ENCODE measurements at regions of chr3 and their contacts with region 1.

Region 1: DNA sequence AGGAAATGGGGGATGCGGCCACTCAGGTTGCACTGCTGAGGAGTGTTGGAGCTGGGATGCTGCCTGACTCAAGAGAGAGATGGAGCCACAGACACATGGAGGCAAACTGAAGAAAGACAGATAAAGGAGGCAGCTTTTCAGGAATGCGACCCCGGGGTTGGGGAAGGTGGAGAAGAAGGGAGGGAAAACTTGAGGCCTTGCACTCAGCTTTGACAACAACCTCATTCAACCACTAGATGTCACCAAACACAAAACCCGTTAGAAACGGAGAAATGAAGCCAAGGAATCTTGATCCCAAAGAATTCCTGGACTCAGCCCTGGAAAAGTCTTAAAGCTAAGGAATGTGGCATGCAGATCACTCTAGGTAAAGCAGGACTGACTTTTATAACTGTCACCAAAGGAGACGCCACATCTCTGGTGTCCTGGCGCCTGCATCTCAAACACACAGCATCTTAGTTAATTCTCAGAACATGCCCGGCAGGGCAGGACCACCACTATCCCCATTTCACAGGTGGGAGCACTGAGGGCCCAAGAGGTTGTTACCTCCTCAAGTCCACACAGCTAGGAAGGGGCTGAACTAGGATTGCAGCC is 59.6 kb upstream of the LMCD1 start:
- DNase-seq: no peak
- H3K4me3 ChIP-seq: no peak overlapping the region
- H3K4me3 Mint-ChIP-seq: no peak overlapping the region
- H3K27ac ChIP-seq: no peak overlapping the region
- H3K27ac Mint-ChIP-seq: no peak overlapping the region
- H3K4me1 ChIP-seq: no peaks in the 10 kb centered on the region
- H3K4me1 Mint-ChIP-seq: no peaks in the 10 kb centered on the region
- H3K27me3 ChIP-seq: no peaks in the 10 kb centered on the region
- H3K27me3 Mint-ChIP-seq: no peaks in the 10 kb centered on the region
- CTCF ChIP-seq: peak; percentile 53

Region 2: DNA sequence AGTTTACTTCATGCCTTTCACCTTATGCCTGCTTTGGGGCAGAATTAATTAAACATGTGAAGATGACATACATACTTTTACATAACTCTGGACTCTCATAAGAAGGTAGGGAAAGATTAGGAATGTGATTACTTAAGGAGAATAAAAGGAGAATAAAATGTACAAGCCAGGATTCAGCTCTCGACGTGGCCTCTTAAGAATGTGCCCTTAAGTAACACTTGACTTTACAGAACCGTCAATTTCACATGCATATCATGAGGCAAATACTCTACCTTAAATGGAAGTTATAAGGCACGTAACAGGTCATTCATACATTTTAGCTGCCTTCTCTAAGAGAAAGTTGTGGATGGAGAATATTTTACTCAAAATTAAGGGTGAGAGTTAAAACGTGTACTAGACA is 204.2 kb before region 1 on chr3:
- intact Hi-C with region 1: no loop called
- DNase-seq: no peak
- H3K4me3 ChIP-seq: no peak overlapping the region
- H3K4me3 Mint-ChIP-seq: no peak overlapping the region
- H3K27ac ChIP-seq: no peak overlapping the region
- H3K27ac Mint-ChIP-seq: no peak overlapping the region
- H3K4me1 ChIP-seq: no peaks in the 10 kb centered on the region
- H3K4me1 Mint-ChIP-seq: no peaks in the 10 kb centered on the region
- H3K27me3 ChIP-seq: no peaks in the 10 kb centered on the region
- H3K27me3 Mint-ChIP-seq: peaks cover 0 to 1% (median 0%) of the 10 kb centered on the region in 3 donors
- CTCF ChIP-seq: no peak

Region 3: GRCh38 chr3:8458711-8459110 is 16.6 kb after region 1 on chr3:
- intact Hi-C with region 1: no loop called
- DNase-seq: no peak
- H3K4me3 ChIP-seq: no peak overlapping the region
- H3K4me3 Mint-ChIP-seq: no peak overlapping the region
- H3K27ac ChIP-seq: no peak overlapping the region
- H3K27ac Mint-ChIP-seq: no peak overlapping the region
- H3K4me1 ChIP-seq: no peaks in the 10 kb centered on the region
- H3K4me1 Mint-ChIP-seq: no peaks in the 10 kb centered on the region
- H3K27me3 ChIP-seq: no peaks in the 10 kb centered on the region
- H3K27me3 Mint-ChIP-seq: peaks cover 2 to 3% (median 3%) of the 10 kb centered on the region in 3 donors
- CTCF ChIP-seq: no peak

Region 4: GRCh38 chr3:8622873-8623691 is 181.0 kb after region 1 on chr3:
- intact Hi-C with region 1: loop called (anchors 5 to 10 kb)
- DNase-seq: peak in 1 of 3 donors; percentile 27
- H3K4me3 ChIP-seq: no peak overlapping the region
- H3K4me3 Mint-ChIP-seq: peak overlapping the region in 1 of 2 donors; percentile 30
- H3K27ac ChIP-seq: no peak overlapping the region
- H3K27ac Mint-ChIP-seq: peak overlapping the region in 1 of 7 donors; percentile 17
- H3K4me1 ChIP-seq: no peaks in the 10 kb centered on the region
- H3K4me1 Mint-ChIP-seq: peaks cover 4% of the 10 kb centered on the region
- H3K27me3 ChIP-seq: no peaks in the 10 kb centered on the region
- H3K27me3 Mint-ChIP-seq: peaks cover 3 to 7% (median 4%) of the 10 kb centered on the region in 3 donors
- CTCF ChIP-seq: peak; percentile 84

Measured in CD14-positive monocyte (primary cell).